ENCODE measurements at regions of chr6 and their contacts with region 1.

Region 1: GRCh38 chr6:26216356-26216885 is 129.2 kb downstream of the HFE start:
- DNase-seq: peak; percentile 99
- ATAC-seq: peak; percentile 64
- H3K4me3 ChIP-seq: peak overlapping the region; percentile 86
- H3K27ac ChIP-seq: peak overlapping the region; percentile 63
- H3K4me1 ChIP-seq: peaks cover 6% of the 10 kb centered on the region; the same call in 1 of the 2 replicates
- H3K27me3 ChIP-seq: no peaks in the 10 kb centered on the region
- CTCF ChIP-seq: no peak

Region 2: DNA sequence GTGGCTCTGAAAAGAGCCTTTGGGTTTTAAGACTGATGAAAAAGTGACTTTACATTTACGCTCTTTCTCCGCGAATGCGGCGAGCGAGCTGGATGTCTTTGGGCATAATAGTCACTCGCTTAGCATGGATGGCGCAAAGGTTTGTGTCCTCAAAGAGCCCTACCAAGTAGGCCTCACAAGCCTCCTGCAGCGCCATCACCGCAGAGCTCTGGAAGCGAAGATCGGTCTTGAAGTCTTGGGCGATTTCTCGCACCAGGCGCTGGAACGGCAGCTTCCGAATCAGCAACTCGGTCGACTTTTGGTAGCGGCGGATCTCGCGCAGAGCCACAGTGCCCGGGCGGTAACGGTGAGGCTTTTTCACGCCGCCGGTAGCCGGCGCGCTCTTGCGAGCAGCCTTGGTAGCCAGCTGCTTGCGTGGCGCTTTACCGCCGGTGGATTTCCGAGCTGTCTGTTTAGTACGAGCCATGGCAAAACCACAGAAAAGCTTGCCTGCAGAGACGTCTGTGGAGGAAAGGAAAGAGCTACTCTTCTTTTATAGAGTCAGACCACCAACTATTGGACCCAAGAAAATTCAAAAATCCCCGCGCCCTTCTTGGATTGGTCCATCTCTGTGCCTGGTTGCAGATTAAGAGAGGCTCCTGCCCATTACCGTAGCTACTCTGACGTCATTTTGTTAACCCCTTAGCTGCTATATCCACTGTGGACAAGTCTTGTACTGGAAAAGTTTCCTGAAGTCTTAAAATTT is 184.7 kb before region 1 on chr6:
- CTCF ChIA-PET with region 1: no interaction called
- POLR2A ChIA-PET with region 1: interaction called, 6 read pairs
- intact Hi-C with region 1: loop called (anchors 5 kb)
- DNase-seq: peak; percentile 99
- ATAC-seq: peak; percentile 60
- H3K4me3 ChIP-seq: peak overlapping the region; percentile 83
- H3K27ac ChIP-seq: peak overlapping the region; percentile 82
- H3K4me1 ChIP-seq: peaks cover 40% of the 10 kb centered on the region
- H3K27me3 ChIP-seq: no peaks in the 10 kb centered on the region
- CTCF ChIP-seq: no peak

Region 3: DNA sequence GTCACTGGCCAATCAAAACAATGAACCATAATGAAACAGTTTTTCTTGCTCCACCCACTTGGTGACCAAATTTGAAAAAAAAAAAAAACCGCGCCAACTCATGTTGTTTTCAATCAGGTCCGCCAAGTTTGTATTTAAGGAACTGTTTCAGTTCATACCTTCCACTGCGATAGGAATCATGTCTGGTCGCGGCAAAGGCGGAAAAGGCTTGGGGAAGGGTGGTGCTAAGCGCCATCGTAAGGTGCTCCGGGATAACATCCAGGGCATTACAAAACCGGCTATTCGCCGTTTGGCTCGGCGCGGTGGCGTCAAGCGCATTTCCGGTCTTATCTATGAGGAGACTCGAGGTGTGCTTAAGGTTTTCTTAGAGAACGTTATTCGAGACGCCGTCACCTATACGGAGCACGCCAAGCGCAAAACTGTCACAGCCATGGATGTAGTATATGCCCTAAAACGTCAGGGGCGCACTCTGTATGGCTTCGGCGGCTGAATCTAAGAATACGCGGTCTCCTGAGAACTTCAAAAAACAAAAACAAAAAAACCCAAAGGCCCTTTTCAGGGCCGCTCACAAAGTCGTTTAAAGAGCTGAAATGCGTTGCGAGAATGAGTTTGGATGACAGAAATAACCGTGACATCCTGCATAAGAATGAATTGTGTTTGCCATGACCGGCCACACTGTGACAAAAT is 112.5 kb before region 1 on chr6:
- CTCF ChIA-PET with region 1: no interaction called
- POLR2A ChIA-PET with region 1: interaction called, 22 read pairs
- intact Hi-C with region 1: no loop called
- DNase-seq: peak; percentile 97
- ATAC-seq: peak; percentile 81
- H3K4me3 ChIP-seq: peak overlapping the region; percentile 68
- H3K27ac ChIP-seq: peak overlapping the region; percentile 84
- H3K4me1 ChIP-seq: peaks cover 28% of the 10 kb centered on the region
- H3K27me3 ChIP-seq: no peaks in the 10 kb centered on the region
- CTCF ChIP-seq: peak; percentile 46; the same call in 1 of the 2 replicates

Region 4: DNA sequence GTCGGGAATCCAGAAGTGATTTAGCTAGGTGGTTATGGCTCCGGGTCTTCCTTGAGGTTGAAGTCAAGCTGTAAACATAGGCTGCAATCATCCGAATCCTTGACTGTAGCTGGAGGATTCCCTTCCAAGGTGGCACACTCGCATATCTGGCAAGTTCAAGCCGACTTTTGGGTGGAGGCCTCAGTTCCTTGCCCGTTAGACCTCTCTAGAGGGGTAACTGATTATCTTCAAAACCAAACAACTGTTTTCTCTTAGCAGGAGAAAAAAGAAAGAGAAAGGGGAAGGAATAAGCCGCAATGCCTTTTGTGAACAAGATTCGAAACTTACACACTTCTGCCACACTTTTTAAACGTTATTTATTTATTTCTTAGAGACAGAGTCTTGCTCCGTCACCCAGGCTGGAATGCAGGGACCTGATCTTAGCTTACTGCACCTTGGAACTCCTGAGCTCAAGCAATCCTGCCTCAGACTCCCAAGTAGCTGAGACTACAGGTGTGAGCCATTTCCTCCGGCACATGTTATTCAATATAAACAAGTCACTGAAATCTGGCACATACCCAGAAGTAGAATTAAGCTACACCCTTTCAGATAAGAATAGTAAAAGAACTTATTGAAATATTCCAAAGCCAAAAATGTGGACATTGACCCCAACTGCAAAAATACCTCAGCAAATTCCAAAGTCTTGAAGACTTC is 52.8 kb before region 1 on chr6:
- CTCF ChIA-PET with region 1: interaction called, 3 read pairs
- POLR2A ChIA-PET with region 1: interaction called, 60 read pairs
- intact Hi-C with region 1: no loop called
- DNase-seq: no peak
- ATAC-seq: no peak
- H3K4me3 ChIP-seq: no peak overlapping the region
- H3K27ac ChIP-seq: no peak overlapping the region
- H3K4me1 ChIP-seq: peaks cover 15% of the 10 kb centered on the region
- H3K27me3 ChIP-seq: no peaks in the 10 kb centered on the region
- CTCF ChIP-seq: no peak

Region 5: GRCh38 chr6:26183581-26184366 is 32.6 kb before region 1 on chr6:
- CTCF ChIA-PET with region 1: no interaction called
- POLR2A ChIA-PET with region 1: no interaction called
- intact Hi-C with region 1: no loop called
- DNase-seq: no peak
- ATAC-seq: no peak
- H3K4me3 ChIP-seq: no peak overlapping the region
- H3K27ac ChIP-seq: no peak overlapping the region
- H3K4me1 ChIP-seq: no peaks in the 10 kb centered on the region
- H3K27me3 ChIP-seq: no peaks in the 10 kb centered on the region
- CTCF ChIP-seq: no peak

Region 6: DNA sequence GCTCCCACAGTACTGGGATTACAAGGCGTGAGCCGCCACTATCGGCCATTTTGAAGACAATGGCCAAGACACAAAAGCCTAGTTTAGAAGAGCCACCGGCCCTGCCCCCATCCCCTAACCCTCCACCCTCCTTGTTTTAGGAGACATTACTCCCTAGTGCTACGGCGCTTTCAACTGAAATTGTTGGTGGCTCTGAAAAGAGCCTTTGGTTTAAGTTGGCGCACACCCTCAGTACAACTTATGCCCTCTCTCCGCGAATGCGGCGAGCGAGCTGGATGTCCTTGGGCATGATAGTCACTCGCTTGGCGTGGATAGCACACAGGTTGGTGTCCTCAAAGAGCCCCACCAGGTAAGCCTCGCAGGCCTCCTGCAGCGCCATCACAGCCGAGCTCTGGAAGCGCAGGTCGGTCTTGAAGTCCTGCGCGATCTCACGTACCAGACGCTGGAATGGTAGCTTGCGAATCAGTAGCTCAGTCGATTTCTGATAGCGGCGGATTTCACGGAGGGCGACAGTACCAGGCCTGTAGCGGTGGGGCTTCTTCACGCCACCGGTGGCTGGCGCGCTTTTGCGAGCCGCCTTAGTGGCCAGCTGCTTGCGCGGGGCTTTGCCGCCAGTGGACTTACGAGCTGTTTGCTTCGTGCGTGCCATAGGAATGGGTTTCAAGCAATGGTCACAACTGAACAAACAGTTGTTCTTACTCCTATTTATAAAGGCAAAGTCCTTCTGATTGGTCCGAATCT is 33.7 kb after region 1 on chr6:
- CTCF ChIA-PET with region 1: interaction called, 3 read pairs
- POLR2A ChIA-PET with region 1: interaction called, 34 read pairs
- intact Hi-C with region 1: no loop called
- DNase-seq: peak; percentile 79
- ATAC-seq: peak; percentile 52
- H3K4me3 ChIP-seq: peak overlapping the region; percentile 69
- H3K27ac ChIP-seq: peak overlapping the region; percentile 73
- H3K4me1 ChIP-seq: no peaks in the 10 kb centered on the region
- H3K27me3 ChIP-seq: no peaks in the 10 kb centered on the region
- CTCF ChIP-seq: peak; percentile 28; the same call in 1 of the 2 replicates

Region 7: DNA sequence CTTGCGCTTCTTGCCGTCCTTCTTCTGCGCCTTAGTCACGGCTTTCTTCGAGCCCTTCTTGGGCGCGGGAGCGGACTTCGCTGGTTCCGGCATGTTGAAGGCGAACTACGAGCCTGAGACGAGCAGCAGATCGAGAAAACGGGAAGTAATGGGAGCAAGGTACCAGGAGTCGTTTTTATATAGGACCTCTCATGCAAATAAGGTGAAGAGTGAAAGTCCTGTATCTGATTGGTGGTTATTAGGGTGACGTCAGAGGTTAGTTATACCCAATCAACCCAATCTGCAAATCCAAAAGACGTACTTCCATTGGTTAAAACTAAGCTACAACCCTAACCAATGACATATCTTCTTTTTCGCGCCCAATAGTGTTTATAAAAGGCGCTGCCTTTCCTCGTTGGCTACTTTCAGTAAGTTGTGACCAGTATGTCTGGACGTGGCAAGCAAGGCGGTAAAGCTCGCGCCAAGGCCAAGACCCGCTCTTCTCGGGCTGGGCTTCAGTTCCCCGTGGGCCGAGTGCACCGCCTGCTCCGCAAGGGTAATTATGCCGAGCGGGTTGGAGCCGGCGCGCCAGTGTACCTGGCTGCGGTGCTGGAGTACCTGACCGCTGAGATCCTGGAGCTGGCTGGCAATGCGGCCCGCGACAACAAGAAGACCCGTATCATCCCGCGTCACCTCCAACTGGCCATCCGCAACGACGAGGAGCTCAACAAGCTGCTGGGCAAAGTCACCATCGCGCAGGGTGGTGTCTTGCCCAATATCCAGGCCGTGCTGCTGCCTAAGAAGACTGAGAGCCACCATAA is 930.5 kb after region 1 on chr6:
- CTCF ChIA-PET with region 1: no interaction called
- POLR2A ChIA-PET with region 1: interaction called, 15 read pairs
- intact Hi-C with region 1: loop called (anchors 5 kb)
- DNase-seq: peak; percentile 98
- ATAC-seq: peak; percentile 70
- H3K4me3 ChIP-seq: peak overlapping the region; percentile 82
- H3K27ac ChIP-seq: peak overlapping the region; percentile 86
- H3K4me1 ChIP-seq: peaks cover 22% of the 10 kb centered on the region; the same call in 1 of the 2 replicates
- H3K27me3 ChIP-seq: no peaks in the 10 kb centered on the region
- CTCF ChIP-seq: no peak